HCT116 (cell line): ENCODE measurements at regions of chr5 and their contacts with region 1.

Region 1: DNA sequence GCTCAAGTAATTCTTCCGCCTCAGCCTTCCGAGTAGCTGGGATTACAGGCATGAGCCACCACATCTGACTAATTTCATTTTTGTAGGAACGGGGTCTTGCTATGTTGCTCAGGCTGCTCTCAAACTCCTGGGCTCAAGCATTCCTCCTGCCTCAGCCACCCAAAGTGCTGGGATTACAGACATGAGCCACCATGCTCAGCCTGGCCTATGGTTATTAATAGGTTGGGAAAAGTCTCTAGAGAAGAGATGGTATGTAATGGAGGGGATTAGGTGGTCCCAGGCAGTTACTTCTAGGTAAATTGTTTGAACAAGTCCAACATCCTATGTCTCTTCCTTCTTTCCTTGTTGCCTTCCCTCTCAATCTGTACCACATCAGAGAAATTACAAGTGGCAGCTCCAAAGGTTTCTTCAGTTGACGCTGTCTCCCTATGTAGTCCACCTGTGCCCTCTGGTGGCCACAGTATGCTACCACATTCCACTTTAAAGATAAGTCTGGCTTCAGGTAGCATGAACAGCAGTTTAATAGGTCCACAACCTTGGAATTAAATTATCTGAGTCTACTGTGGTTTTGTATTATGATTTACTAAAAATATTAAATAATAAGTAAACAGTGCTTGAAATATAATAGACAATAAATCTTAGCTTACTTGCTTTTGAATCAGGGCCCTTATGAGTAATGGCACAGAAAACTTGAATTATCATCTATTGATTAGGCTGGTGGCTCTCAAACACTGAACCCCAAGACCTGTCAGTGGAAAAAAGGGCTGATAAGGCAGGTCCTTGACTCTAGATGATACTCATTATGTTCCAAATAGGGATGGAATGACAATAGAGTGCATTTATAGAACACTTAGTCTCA is 9.7 kb downstream of the TIGD6 start:
- DNase-seq: peak; percentile 64
- ATAC-seq: peak; percentile 97
- H3K4me3 ChIP-seq: no peak overlapping the region
- H3K27ac ChIP-seq: no peak overlapping the region
- H3K4me1 ChIP-seq: no peaks in the 10 kb centered on the region
- H3K27me3 ChIP-seq: no peaks in the 10 kb centered on the region
- CTCF ChIP-seq: peak; percentile 81 to 96 (median 88)
- POLR2A ChIP-seq: no peak
- RAD21 ChIP-seq: peak; percentile 98

Region 2: DNA sequence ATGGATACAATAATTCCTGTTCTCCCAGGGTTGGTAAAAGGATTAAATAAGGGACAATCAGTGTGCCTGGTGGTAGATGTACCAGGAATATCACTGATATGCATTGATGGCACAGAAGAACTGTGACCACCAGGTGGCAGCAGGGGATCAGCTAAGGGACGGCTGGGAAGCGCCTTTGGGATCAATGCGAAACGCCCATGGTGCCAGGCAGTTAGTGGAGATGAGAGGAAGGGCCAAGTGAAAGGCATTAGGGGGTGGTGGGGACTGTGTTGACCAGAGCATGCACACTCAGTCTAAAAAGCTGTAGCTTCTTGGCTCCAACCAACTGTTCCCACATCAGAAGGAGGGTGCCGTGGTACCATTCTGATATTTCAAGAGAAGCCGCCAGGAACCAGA is 353.9 kb before region 1 on chr5:
- CTCF ChIA-PET with region 1: interaction called, 18 read pairs
- POLR2A ChIA-PET with region 1: no interaction called
- RAD21 ChIA-PET with region 1: interaction called in 1 of 2 experiments, 3 read pairs
- intact Hi-C with region 1: loop called (anchors 1 kb)
- DNase-seq: peak; percentile 65
- ATAC-seq: peak; percentile 88
- H3K4me3 ChIP-seq: no peak overlapping the region
- H3K27ac ChIP-seq: no peak overlapping the region
- H3K4me1 ChIP-seq: peaks cover 16 to 35% of the 10 kb centered on the region in 2 experiments
- H3K27me3 ChIP-seq: no peaks in the 10 kb centered on the region
- CTCF ChIP-seq: peak; percentile 84 to 97 (median 94)
- POLR2A ChIP-seq: no peak
- RAD21 ChIP-seq: peak; percentile 100

Region 3: DNA sequence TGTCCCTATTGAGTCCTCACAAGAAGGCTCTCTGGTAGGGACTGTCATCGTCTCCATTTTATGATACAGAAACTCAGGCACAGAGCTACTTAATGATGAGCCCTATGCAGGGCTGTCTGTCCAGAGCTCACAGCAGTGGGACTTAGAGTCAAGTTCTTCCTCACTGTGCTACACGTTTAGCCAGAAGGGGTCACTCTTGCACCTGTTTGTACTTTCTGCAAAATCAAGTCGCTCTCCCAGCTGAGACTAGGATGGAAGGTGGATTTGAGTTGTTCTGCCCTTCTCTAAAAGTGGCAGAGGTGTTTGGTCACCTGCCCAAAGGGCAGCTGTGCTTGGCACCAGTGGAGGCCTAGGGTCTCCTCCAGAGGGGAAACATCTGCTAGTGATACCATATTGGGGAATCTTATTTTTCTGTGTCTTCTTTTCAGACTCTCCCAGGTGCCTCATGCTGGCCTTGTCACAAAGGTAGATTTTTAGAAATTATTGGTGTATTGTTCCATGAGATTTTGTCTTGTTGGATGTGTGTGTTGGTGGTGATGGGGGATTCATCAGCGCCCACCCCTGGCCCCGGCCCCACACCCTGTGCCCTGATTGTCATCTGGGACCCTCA is 156.4 kb before region 1 on chr5:
- CTCF ChIA-PET with region 1: interaction called, 88 read pairs
- POLR2A ChIA-PET with region 1: interaction called, 4 read pairs
- RAD21 ChIA-PET with region 1: interaction called, 6 to 11 read pairs
- intact Hi-C with region 1: loop called (anchors 1 kb)
- DNase-seq: peak; percentile 74
- ATAC-seq: peak; percentile 65
- H3K4me3 ChIP-seq: no peak overlapping the region
- H3K27ac ChIP-seq: no peak overlapping the region
- H3K4me1 ChIP-seq: peaks cover 0 to 9% of the 10 kb centered on the region in 2 experiments; a peak in 2 of 4 replicates
- H3K27me3 ChIP-seq: no peaks in the 10 kb centered on the region
- CTCF ChIP-seq: peak; percentile 71 to 83 (median 78); a peak in 5 of 6 replicates
- POLR2A ChIP-seq: no peak
- RAD21 ChIP-seq: peak; percentile 83

Region 4: DNA sequence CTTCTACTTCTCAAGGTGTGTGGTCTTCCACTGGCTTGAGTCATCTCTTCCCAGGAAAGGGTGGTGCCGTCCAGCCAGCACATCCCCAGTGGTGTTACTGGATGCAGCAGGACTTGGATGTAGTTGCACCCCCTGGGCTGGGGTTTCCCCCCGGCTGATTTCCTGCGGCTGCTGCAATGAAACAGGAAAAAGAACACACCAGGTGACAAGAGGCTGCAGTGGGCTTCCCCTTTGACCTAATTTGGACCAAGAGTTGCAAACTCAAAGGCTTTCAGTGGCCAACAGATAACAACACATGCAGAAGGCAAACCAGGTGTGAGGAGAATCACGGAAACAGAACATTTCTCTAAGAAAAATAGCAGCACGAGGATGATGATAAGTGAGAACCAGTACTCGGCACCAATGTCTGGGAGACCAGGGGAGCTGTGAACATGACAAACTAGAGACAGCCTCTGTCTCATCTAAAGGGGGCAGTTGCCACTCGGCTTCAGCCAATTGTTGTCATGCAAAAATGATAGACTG is 129.9 kb before region 1 on chr5:
- CTCF ChIA-PET with region 1: interaction called, 10 read pairs
- POLR2A ChIA-PET with region 1: no interaction called
- RAD21 ChIA-PET with region 1: no interaction called
- intact Hi-C with region 1: no loop called
- DNase-seq: no peak
- ATAC-seq: no peak
- H3K4me3 ChIP-seq: no peak overlapping the region
- H3K27ac ChIP-seq: no peak overlapping the region
- H3K4me1 ChIP-seq: no peaks in the 10 kb centered on the region; a peak in 1 of 4 replicates
- H3K27me3 ChIP-seq: no peaks in the 10 kb centered on the region
- CTCF ChIP-seq: no peak
- POLR2A ChIP-seq: no peak
- RAD21 ChIP-seq: no peak

Region 5: DNA sequence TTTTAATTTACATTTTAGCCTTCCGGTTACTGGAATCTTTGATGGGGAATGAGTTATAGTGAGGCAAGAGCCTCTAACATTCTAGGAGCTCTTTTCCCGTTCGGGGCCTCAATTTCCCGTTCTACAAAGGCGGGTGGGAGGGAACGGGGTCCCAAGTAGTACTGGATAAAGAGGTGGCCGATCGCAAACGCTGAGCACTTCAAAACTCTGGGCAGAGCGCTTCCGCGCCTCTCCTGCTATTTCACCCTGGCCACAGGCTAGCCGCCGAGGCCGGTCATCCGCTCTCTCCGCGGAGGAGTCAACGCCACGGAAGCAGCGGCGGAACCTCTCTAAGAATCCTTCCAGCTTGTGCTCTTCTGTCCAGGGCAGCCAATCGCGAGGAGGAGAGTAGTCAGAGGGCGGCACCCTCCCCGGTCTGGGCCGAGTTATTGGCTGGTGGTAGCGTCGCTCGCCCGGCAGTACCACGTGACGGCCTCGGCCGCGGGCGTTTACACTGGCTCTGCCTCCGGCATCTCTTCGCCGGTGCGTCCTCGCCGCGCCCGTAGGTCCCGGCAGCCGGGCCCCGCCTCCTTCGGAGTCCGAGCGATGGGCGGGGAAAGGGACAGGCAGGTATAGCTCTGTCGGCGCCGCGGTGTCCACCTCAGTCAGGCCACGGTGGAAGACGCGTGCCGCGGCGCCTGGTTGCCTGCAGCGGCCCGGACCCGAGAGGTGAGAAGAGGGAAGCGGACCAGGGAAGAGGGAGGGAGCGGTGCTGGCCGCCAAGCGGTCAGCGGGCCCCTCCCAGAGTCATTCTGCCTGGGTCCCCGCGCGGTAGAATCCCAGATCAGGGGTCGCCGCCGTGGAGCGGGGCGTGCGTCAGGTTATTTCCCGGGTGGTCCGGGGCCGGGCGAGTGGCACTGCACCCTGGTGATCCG is 30.2 kb before region 1 on chr5 and contains the start of gene SLC26A2:
- CTCF ChIA-PET with region 1: interaction called, 12 read pairs
- POLR2A ChIA-PET with region 1: interaction called, 3 read pairs
- RAD21 ChIA-PET with region 1: interaction called in 1 of 2 experiments, 4 read pairs
- intact Hi-C with region 1: no loop called
- DNase-seq: peak; percentile 93
- ATAC-seq: peak; percentile 97
- H3K4me3 ChIP-seq: peak within 1 kb of the TSS; percentile 74
- H3K27ac ChIP-seq: peak within 1 kb of the TSS; percentile 52
- H3K4me1 ChIP-seq: peaks cover 8 to 27% of the 10 kb centered on the region in 2 experiments
- H3K27me3 ChIP-seq: no peaks in the 10 kb centered on the region
- CTCF ChIP-seq: no peak
- POLR2A ChIP-seq: peak; percentile 84
- RAD21 ChIP-seq: no peak
- total RNA-seq, gene SLC26A2: 7.8 TPM